ENCODE measurements at regions of chr12 and their contacts with region 1.

Region 1: DNA sequence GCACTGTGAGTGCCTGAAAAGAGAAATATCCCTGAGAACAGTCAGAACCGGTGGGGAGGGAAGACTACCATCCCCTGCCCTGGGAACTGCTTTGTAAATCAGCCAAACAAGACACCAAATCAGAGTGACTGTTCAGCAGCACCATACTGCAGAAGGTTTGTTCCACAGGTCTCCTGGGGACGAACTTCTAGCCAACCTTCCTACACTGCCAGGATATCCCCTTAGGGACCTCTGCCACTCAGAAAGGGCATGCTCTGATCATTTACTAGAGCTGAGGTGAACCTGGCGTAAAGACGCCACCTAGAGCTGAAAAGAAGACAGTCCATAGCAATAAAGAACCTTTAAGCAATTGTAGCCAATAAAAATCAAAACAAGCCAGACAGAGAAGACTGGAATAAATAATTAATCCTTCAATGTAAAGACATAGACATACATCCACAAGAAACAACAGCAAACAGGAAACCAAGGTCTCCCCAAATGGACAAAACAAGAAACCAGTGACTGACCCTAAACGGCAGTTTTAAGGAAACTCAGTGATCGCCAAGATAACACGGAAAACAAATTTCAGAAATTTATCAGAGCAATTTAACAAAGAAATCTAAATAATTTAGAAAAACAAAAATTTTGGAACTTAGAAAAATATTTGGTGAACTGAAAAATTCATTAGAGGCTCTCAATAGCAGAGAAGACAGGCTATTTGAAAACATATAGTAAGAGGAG is 228.1 kb upstream of the AMIGO2 start:
- DNase-seq: peak; percentile 88
- H3K4me3 Mint-ChIP-seq: peak overlapping the region; percentile 88
- H3K27ac Mint-ChIP-seq: peak overlapping the region; percentile 88
- H3K4me1 Mint-ChIP-seq: peaks cover 51% of the 10 kb centered on the region
- H3K27me3 Mint-ChIP-seq: no peaks in the 10 kb centered on the region

Region 2: GRCh38 chr12:47226199-47226598 is 81.6 kb before region 1 on chr12:
- intact Hi-C with region 1: no loop called
- DNase-seq: no peak
- H3K4me3 Mint-ChIP-seq: no peak overlapping the region
- H3K27ac Mint-ChIP-seq: peak overlapping the region; percentile 22
- H3K4me1 Mint-ChIP-seq: peaks cover 67% of the 10 kb centered on the region
- H3K27me3 Mint-ChIP-seq: no peaks in the 10 kb centered on the region

Region 3: GRCh38 chr12:47236109-47236714 is 71.6 kb before region 1 on chr12:
- intact Hi-C with region 1: loop called (anchors 5 kb)
- DNase-seq: no peak
- H3K4me3 Mint-ChIP-seq: peak overlapping the region; percentile 12
- H3K27ac Mint-ChIP-seq: peak overlapping the region; percentile 52
- H3K4me1 Mint-ChIP-seq: peaks cover 35% of the 10 kb centered on the region
- H3K27me3 Mint-ChIP-seq: no peaks in the 10 kb centered on the region

Region 4: DNA sequence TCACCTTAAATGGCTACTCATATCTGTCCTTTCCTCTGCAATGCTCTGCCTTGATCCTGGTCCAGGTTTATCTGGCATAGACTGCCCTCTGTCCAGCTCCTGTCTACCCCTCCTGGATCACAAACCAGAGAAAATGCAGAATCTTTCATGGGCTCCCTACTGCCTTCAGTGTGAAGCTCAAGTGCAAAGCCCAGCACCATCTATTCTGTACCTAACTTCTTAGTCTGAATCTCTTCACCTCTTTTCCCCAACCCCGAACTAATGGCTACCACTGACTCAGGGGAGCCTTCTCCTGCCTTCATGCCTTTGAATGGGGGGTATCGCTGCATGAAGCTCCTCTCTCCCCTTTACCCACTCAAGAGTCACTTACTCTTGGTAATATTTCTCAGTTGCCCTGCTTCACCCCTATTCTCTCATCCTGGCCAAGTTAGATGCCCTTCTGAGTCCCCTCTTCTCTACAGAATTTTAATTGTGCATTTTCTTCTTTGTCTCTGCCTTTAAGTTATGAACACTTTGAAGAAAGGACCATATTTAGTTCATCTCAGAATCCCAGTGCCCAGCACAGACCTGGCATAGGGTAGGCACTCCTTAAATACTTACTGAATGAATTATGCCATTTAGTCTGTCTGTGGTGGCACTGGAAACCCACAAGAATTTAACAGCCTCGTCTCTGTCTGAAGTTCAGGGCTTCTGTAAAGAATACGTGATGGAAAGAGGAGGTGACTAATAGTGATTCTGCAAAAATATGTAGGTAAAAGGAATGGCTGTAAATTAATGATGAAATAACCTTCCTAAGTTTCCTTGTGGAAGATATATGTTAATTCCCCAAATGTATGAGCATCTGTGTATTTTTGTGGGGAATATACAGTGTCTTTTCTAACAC is 36.8 kb before region 1 on chr12:
- intact Hi-C with region 1: loop called (anchors 5 kb)
- DNase-seq: no peak
- H3K4me3 Mint-ChIP-seq: peak overlapping the region; percentile 0
- H3K27ac Mint-ChIP-seq: peak overlapping the region; percentile 2
- H3K4me1 Mint-ChIP-seq: peaks cover 66% of the 10 kb centered on the region
- H3K27me3 Mint-ChIP-seq: no peaks in the 10 kb centered on the region